Astrocyte of the cerebellum (primary cell): ENCODE measurements at regions of chr17 and their contacts with region 1.

Region 1: GRCh38 chr17:82418001-82418986 is at the starts of genes HEXD and OGFOD3:
- DNase-seq: peak; percentile 40
- H3K4me3 ChIP-seq: peak within 1 kb of the TSS; percentile 72
- CTCF ChIP-seq: no peak

Region 2: GRCh38 chr17:82349287-82349701 is 69.0 kb before region 1 on chr17:
- in situ Hi-C with region 1: loop called (anchors 10 kb)
- DNase-seq: no peak
- H3K4me3 ChIP-seq: no peak overlapping the region
- CTCF ChIP-seq: no peak

Region 3: GRCh38 chr17:82361885-82362633 is 56.2 kb before region 1 on chr17:
- in situ Hi-C with region 1: loop called (anchors 5 kb)
- DNase-seq: no peak
- H3K4me3 ChIP-seq: no peak overlapping the region
- CTCF ChIP-seq: no peak